ENCODE measurements at regions of chr1 and their contacts with region 1.

Region 1: DNA sequence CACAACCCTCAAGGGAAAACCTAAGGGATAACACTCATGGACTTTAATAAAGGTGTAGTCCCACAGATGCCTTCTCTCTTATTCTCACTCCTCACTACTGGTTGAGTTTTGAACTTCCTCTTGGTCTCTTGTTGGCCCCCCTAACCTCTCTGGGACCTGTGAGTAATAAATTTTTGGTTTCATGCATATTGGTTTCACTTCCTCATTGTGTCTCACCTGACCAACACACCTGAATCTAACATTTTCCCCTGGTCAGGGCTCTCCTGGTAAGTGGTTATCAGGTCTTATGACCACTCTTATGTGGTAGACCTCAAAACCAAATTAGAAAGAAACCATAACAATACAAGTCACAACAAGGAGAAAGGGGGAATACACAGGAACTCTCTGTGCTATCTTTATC is 60.5 kb upstream of the PRMT6 start:
- DNase-seq: no peak
- H3K4me3 ChIP-seq: no peak overlapping the region
- H3K4me3 Mint-ChIP-seq: no peak overlapping the region
- H3K27ac Mint-ChIP-seq: no peak overlapping the region
- H3K4me1 ChIP-seq: no peaks in the 10 kb centered on the region
- H3K4me1 Mint-ChIP-seq: no peaks in the 10 kb centered on the region
- H3K27me3 ChIP-seq: no peaks in the 10 kb centered on the region
- H3K27me3 Mint-ChIP-seq: no peaks in the 10 kb centered on the region
- CTCF ChIP-seq: no peak

Region 2: DNA sequence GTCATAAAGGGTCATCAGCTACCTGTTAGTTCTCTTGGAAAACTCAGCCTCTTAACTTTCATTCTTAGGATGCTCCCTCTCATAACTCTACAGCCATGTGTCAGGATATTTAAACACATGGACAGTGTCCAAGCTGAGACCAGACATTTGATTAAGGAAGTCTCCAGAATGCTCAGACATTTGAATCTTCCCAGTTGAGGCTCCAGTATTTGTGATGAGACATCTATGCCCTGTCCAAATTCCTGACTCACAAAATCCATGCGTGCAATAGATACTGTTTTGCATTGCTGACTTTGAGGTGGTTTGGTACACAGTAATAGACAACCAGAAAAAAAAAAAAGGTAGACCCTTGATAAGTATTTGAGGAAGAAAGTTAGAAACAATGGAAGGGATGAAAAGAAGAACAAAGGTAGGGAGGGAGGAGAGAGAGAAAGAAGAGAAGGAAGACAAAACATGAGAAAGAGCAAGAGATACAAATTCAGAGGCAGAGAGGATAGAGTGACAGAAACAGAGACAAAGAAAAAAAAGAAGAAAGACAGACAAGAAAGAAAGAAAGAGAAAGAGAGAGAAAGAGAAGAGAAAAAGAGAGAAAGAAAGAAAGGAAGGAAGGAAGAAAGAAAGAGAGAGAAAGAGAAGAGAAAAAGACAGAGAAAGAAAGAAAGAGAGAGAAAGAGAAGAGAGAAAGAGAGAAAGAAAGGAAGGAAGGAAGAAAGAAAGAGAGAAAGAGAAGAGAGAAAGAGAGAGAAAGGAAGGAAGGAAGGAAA is 215.0 kb before region 1 on chr1:
- CTCF ChIA-PET with region 1: no interaction called
- POLR2A ChIA-PET with region 1: no interaction called
- intact Hi-C with region 1: no loop called
- DNase-seq: no peak
- H3K4me3 ChIP-seq: no peak overlapping the region
- H3K4me3 Mint-ChIP-seq: no peak overlapping the region
- H3K27ac Mint-ChIP-seq: no peak overlapping the region
- H3K4me1 ChIP-seq: no peaks in the 10 kb centered on the region
- H3K4me1 Mint-ChIP-seq: no peaks in the 10 kb centered on the region
- H3K27me3 ChIP-seq: no peaks in the 10 kb centered on the region
- H3K27me3 Mint-ChIP-seq: peaks cover 7% of the 10 kb centered on the region
- CTCF ChIP-seq: no peak

Region 3: DNA sequence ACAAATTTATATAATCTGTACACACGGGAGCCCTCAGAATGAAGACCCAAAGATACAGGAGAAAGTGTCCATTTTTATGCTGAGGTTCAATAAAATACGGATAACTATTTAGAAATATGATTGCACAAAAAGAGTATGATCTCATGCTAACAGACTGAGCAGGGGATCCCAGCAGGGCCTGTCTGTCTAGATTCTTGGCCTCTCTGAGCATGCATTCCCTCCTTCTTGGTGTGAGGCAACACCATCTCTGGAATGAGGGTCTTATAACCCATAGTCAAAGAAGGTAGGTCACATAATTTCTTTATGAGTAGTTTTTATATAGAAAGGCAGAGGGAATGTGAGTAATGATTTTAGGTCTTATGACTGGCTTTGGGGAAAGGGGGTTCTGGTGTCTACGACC is 65.9 kb after region 1 on chr1:
- CTCF ChIA-PET with region 1: no interaction called
- POLR2A ChIA-PET with region 1: no interaction called
- intact Hi-C with region 1: loop called (anchors 2 kb)
- DNase-seq: no peak
- H3K4me3 ChIP-seq: no peak overlapping the region
- H3K4me3 Mint-ChIP-seq: no peak overlapping the region
- H3K27ac Mint-ChIP-seq: no peak overlapping the region
- H3K4me1 ChIP-seq: no peaks in the 10 kb centered on the region
- H3K4me1 Mint-ChIP-seq: no peaks in the 10 kb centered on the region
- H3K27me3 ChIP-seq: no peaks in the 10 kb centered on the region
- H3K27me3 Mint-ChIP-seq: no peaks in the 10 kb centered on the region
- CTCF ChIP-seq: no peak